CD4-positive, alpha-beta memory T cell (primary cell): ENCODE measurements at regions of chr4 and their contacts with region 1.

Region 1: GRCh38 chr4:86544310-86544966 is 49.7 kb upstream of the PTPN13 start:
- DNase-seq: peak; percentile 45 to 77 (median 55)
- H3K4me3 ChIP-seq: no peak overlapping the region
- H3K4me3 Mint-ChIP-seq: peak overlapping the region; percentile 51 to 79 (median 72)
- H3K27ac ChIP-seq: peak overlapping the region; percentile 33
- H3K27ac Mint-ChIP-seq: peak overlapping the region; percentile 80 to 97 (median 90)
- H3K4me1 ChIP-seq: peaks cover 32% of the 10 kb centered on the region
- H3K4me1 Mint-ChIP-seq: peaks cover 23 to 33% (median 30%) of the 10 kb centered on the region in 4 donors
- H3K27me3 ChIP-seq: no peaks in the 10 kb centered on the region
- H3K27me3 Mint-ChIP-seq: no peaks in the 10 kb centered on the region

Region 2: DNA sequence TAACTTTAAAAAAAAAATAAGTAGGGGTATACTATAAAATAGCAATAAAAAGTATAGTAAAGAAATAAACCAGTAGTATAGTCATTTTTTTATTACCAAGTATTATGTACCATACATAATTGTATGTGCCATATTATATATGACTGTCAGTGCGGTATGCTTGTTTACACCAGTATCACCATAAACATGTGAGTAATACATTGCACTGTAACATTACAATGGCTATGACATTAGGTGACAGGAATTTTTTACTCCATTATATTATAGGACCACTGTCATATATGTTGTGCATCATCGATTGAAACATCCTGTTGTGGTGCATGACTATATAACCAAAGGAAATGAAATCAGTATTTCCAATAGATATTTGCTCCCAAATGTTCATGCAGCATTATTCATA is 1246.4 kb before region 1 on chr4:
- CTCF ChIA-PET with region 1: no interaction called
- POLR2A ChIA-PET with region 1: no interaction called
- intact Hi-C with region 1: no loop called
- DNase-seq: no peak
- H3K4me3 ChIP-seq: no peak overlapping the region
- H3K4me3 Mint-ChIP-seq: no peak overlapping the region
- H3K27ac ChIP-seq: no peak overlapping the region
- H3K27ac Mint-ChIP-seq: no peak overlapping the region
- H3K4me1 ChIP-seq: no peaks in the 10 kb centered on the region
- H3K4me1 Mint-ChIP-seq: no peaks in the 10 kb centered on the region
- H3K27me3 ChIP-seq: no peaks in the 10 kb centered on the region
- H3K27me3 Mint-ChIP-seq: no peaks in the 10 kb centered on the region

Region 3: GRCh38 chr4:86557526-86557925 is 13.1 kb after region 1 on chr4:
- CTCF ChIA-PET with region 1: interaction called, 3 read pairs
- POLR2A ChIA-PET with region 1: interaction called, 15 read pairs
- intact Hi-C with region 1: no loop called
- DNase-seq: no peak
- H3K4me3 ChIP-seq: no peak overlapping the region
- H3K4me3 Mint-ChIP-seq: no peak overlapping the region
- H3K27ac ChIP-seq: no peak overlapping the region
- H3K27ac Mint-ChIP-seq: no peak overlapping the region
- H3K4me1 ChIP-seq: peaks cover 37% of the 10 kb centered on the region
- H3K4me1 Mint-ChIP-seq: peaks cover 11 to 23% (median 12%) of the 10 kb centered on the region in 4 donors
- H3K27me3 ChIP-seq: no peaks in the 10 kb centered on the region
- H3K27me3 Mint-ChIP-seq: no peaks in the 10 kb centered on the region

Region 4: DNA sequence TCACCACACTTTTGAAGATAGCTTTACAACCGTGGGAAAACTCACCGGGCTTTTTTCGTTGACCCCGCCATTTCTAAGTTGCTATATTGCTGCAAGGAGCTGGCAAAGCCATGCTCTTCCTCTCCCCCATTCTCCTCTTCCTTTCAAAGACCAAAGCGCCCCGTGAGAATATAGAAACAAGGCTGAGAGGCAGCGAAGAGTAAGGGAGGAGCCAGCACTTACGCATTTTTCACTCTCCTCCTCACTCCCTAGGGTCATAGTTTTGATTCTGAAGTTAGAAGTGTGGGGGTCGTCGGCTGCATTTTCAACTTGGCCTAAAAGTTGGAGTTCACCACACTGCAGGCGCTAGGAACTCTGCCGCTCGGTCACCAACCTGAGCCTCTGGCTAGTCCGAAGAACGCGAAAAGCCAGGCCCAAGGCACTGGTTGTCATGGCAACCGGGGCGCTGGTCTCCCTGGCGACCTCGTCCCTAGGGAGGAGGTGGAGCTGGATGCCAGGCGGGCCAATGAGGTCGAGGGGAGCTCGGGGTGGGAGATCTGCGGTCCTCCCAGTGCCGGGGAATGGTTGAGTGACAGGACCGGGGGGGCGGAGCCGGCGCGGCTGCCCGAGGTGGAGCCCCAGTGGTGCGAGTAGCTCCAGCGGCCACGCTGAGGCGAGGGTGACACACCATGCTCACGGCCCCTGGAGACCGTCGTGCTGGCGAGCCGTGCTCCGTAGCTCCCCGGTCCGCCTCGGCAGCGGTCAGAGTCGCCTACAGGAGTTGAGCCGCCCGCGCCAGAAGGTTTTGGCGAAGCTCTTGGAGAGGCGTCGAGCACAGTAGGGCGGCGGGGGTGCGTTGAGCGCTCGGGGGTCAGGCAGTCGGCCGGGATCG is 49.5 kb after region 1 on chr4 and contains the start of gene PTPN13:
- CTCF ChIA-PET with region 1: interaction called, 3 read pairs
- POLR2A ChIA-PET with region 1: interaction called, 15 read pairs
- intact Hi-C with region 1: no loop called
- DNase-seq: peak; percentile 66 to 83 (median 75)
- H3K4me3 ChIP-seq: peak within 1 kb of the TSS; percentile 59 to 76
- H3K4me3 Mint-ChIP-seq: peak within 1 kb of the TSS; percentile 86 to 96 (median 91)
- H3K27ac ChIP-seq: peak within 1 kb of the TSS; percentile 61
- H3K27ac Mint-ChIP-seq: peak within 1 kb of the TSS; percentile 85 to 96 (median 90)
- H3K4me1 ChIP-seq: peaks cover 18% of the 10 kb centered on the region
- H3K4me1 Mint-ChIP-seq: peaks cover 6 to 25% (median 14%) of the 10 kb centered on the region in 4 donors
- H3K27me3 ChIP-seq: no peaks in the 10 kb centered on the region
- H3K27me3 Mint-ChIP-seq: peaks cover 7 to 19% of the 10 kb centered on the region in 2 donors
- total RNA-seq, gene PTPN13: 7.6 to 7.8 TPM

Region 5: GRCh38 chr4:86918539-86919072 is 374.2 kb after region 1 on chr4:
- CTCF ChIA-PET with region 1: no interaction called
- POLR2A ChIA-PET with region 1: no interaction called
- intact Hi-C with region 1: no loop called
- DNase-seq: no peak
- H3K4me3 ChIP-seq: no peak overlapping the region
- H3K4me3 Mint-ChIP-seq: no peak overlapping the region
- H3K27ac ChIP-seq: no peak overlapping the region
- H3K27ac Mint-ChIP-seq: no peak overlapping the region
- H3K4me1 ChIP-seq: no peaks in the 10 kb centered on the region
- H3K4me1 Mint-ChIP-seq: peaks cover 0 to 4% (median 2%) of the 10 kb centered on the region in 4 donors
- H3K27me3 ChIP-seq: no peaks in the 10 kb centered on the region
- H3K27me3 Mint-ChIP-seq: no peaks in the 10 kb centered on the region